Posterior vena cava (tissue), 2 donors: ENCODE measurements at regions of chr13 and their contacts with region 1.

Region 1: DNA sequence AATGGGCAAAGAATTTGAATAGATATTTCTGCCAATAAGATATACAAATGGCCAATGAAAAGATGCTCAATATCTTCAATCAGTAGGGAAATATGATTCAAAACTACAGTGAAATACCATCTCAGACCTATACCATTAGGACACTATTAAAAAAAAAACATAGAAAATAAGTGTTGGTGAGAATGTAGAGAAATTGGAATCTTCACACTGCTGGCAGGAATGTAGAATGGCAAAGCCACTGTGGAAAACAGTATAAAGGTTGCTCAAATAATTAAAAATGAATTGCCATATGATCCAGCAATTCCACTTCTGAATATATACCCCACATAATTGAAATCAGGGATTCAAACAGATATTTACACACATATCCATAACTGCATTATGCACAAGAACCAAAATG is 88.1 kb upstream of the STARD13 start:
- DNase-seq: no peak

Region 2: GRCh38 chr13:32866921-32867320 is 506.7 kb before region 1 on chr13:
- intact Hi-C with region 1: loop called in 1 of 2 experiments (anchors 5 kb)
- DNase-seq: no peak

Region 3: DNA sequence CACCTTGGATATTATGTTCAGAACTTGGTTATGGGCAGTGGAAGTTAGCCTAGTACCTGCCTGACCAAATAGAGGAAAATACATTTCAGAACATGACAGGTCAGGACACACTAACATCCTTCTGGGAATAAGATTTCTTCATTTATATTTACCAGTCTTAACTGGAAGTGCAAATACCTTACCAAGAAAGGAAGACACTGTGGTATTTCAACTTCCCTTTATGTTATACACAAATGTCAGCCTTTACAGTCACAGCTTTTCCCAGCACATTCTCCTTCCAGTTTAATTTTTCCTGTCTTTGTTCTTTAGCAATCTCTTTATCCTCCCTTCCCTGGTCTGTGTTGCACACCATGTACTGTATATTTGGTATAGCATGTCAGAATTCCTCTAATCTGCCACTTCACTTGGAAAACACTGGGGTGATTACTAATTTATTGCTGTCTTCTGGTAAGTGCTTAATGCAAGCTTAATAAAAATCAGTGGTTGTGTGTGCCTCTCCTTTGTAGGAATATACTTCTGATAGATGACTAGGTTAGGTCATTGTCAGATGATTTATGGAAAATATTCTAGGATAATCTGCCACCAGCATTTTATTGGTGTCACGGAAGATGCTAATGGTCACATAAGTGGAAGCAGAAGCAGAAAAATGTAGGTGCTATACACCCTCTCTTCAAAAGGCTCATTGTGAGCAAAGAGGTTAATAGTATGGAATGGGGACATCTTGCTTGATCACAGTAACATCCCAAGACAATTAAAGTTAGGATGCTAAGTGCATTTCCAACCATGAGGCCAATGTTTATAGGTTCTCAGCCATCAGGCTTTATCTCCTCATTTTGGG is 36.3 kb after region 1 on chr13:
- intact Hi-C with region 1: no loop called
- DNase-seq: no peak

Region 4: GRCh38 chr13:34803756-34804155 is 1430.1 kb after region 1 on chr13:
- intact Hi-C with region 1: no loop called
- DNase-seq: no peak